Pancreas (tissue), 10 donors: ENCODE measurements at regions of chr5 and their contacts with region 1.

Region 1: GRCh38 chr5:55319491-55319890 is 11.7 kb downstream of the MTREX start:
- DNase-seq: no peak
- ATAC-seq: no peak
- H3K4me3 ChIP-seq: no peak overlapping the region
- H3K27ac ChIP-seq: no peak overlapping the region
- H3K4me1 ChIP-seq: peaks cover 0 to 1% (median under 1%) of the 10 kb centered on the region in 3 donors
- H3K27me3 ChIP-seq: no peaks in the 10 kb centered on the region
- CTCF ChIP-seq: no peak

Region 2: DNA sequence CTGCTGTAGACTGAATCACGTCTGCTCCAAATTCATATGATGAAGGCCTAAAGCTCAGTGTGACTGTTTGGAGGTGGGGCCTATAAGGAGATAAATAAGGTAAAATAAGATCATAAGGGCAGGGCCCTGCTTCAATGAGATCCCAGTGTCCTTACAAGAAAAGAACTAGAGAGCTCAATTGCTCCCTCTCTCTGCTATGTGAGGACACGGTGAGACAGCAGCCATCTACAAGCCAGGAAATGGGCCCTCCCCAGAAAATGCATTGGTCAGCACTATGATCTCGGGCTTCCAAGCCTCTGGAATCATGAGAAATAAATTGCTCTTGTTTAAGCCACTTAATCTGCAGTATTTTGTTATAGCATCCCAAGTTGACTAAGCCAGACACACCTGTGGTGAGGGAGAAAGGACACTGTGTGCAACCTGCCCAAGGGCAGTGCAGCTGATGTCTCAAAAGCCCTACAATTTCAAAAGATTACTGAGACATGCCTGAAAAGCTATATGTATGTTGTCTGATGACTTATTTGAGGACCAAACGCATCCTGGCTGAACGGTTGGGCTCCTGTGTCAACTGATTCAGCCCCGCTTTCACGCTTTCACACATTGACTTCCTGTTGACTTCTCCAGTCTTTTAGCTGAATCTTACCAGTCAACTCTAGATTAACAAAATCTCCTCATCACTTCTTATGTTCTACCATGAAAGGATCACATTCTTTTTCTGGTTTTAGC is 282.3 kb before region 1 on chr5:
- intact Hi-C with region 1: no loop called
- DNase-seq: no peak
- ATAC-seq: no peak
- H3K4me3 ChIP-seq: no peak overlapping the region
- H3K27ac ChIP-seq: no peak overlapping the region
- H3K4me1 ChIP-seq: no peaks in the 10 kb centered on the region
- H3K27me3 ChIP-seq: no peaks in the 10 kb centered on the region
- CTCF ChIP-seq: no peak

Region 3: DNA sequence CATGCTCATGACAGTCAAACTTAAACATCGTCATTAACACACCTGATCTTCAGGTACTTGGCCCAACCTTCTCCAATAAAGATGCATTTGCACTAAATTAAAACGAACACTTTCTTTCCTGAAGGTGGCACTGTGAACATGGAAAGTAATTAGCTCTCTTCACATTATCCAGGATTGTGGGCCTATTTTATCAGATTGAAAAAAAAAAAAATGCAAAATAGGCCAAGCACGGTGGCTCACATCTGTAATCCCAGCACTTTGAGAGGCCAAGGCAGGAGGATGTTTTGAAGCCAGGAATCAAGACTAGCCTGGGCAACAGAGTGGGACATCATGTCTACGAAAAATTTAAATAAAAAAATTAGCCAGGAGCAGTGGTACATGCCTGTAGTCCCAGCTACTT is 132.1 kb before region 1 on chr5:
- intact Hi-C with region 1: loop called in 1 of 3 experiments (anchors 10 kb)
- DNase-seq: no peak
- ATAC-seq: peak; percentile 84 to 94 (median 86)
- H3K4me3 ChIP-seq: no peak overlapping the region
- H3K27ac ChIP-seq: no peak overlapping the region
- H3K4me1 ChIP-seq: peaks cover 0 to 12% (median 10%) of the 10 kb centered on the region in 3 donors
- H3K27me3 ChIP-seq: no peaks in the 10 kb centered on the region
- CTCF ChIP-seq: peak in 3 of 4 donors; percentile 10 to 30 (median 20)

Region 4: DNA sequence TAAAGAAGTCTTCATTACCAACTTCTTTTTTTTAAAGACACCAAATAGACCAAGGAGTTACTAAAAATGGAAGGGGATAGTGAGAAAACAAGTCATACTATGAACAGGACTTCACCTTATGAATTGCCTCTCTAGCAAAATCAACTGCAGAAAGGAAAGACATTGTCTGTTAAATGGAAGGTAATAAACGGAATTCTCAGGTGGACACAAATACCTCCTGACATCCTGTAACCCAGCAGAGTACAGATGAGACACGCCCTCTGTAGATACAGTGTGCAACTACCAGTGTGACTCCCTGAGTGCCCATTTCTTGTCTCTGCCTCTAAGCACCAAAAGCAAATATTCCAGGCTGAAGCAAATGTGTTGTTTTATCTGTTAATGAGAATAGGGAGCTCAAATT is 227.5 kb after region 1 on chr5:
- intact Hi-C with region 1: no loop called
- DNase-seq: peak in 2 of 6 donors; percentile 22 to 36
- ATAC-seq: peak; percentile 81 to 96 (median 88)
- H3K4me3 ChIP-seq: no peak overlapping the region
- H3K27ac ChIP-seq: no peak overlapping the region
- H3K4me1 ChIP-seq: no peaks in the 10 kb centered on the region
- H3K27me3 ChIP-seq: no peaks in the 10 kb centered on the region
- CTCF ChIP-seq: no peak

Region 5: GRCh38 chr5:55691265-55692105 is 372.0 kb after region 1 on chr5:
- intact Hi-C with region 1: loop called in 1 of 3 experiments (anchors 10 kb)
- DNase-seq: no peak
- ATAC-seq: peak in 3 of 4 donors; percentile 83 to 85 (median 84)
- H3K4me3 ChIP-seq: no peak overlapping the region
- H3K27ac ChIP-seq: no peak overlapping the region
- H3K4me1 ChIP-seq: peaks cover 0 to 25% (median 9%) of the 10 kb centered on the region in 3 donors
- H3K27me3 ChIP-seq: no peaks in the 10 kb centered on the region
- CTCF ChIP-seq: peak in 3 of 4 donors; percentile 49 to 58 (median 50)

Region 6: GRCh38 chr5:56490951-56491468 is 1171.5 kb after region 1 on chr5:
- intact Hi-C with region 1: no loop called
- DNase-seq: no peak
- ATAC-seq: peak in 3 of 4 donors; percentile 30 to 81 (median 61)
- H3K4me3 ChIP-seq: no peak overlapping the region
- H3K27ac ChIP-seq: peak overlapping the region in 1 of 4 donors; percentile 50
- H3K4me1 ChIP-seq: peaks cover 0 to 5% (median 0%) of the 10 kb centered on the region in 3 donors
- H3K27me3 ChIP-seq: no peaks in the 10 kb centered on the region
- CTCF ChIP-seq: no peak